Ascending aorta (tissue), 2 donors: ENCODE measurements at regions of chr9 and their contacts with region 1.

Region 1: DNA sequence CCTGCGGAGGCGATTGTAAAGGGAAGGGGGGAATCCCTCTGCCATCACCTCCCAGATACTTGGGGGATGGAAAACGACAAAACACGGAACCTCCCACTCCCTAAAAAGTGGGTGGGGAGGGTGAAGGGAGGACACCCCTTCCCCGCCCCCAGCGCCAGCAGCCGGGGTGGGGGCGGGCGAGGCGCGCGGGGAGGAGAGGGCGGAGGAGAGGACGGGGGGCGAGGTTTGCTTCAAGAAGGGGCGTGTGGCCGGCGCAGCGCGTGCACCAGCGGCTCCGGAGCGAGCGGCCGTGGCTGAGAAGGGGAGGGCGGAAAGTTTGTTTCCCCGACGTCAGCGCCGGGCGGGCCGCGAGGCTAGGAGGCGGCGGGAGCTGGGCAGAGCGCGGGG is at the start of gene PRRX2:
- DNase-seq: peak in 1 of 2 donors; percentile 77
- H3K4me3 ChIP-seq: peak within 1 kb of the TSS; percentile 59 to 76
- H3K27ac ChIP-seq: peak within 1 kb of the TSS; percentile 68 to 74
- H3K4me1 ChIP-seq: peaks cover 0 to 30% of the 10 kb centered on the region in 2 donors
- H3K27me3 ChIP-seq: no peaks in the 10 kb centered on the region
- CTCF ChIP-seq: no peak
- total RNA-seq, gene PRRX2: 112 TPM

Region 2: GRCh38 chr9:129648092-129648763 is 17.2 kb before region 1 on chr9:
- intact Hi-C with region 1: loop called (anchors 2 kb)
- DNase-seq: peak in 1 of 2 donors; percentile 86
- H3K4me3 ChIP-seq: no peak overlapping the region
- H3K27ac ChIP-seq: peak overlapping the region; percentile 70 to 81
- H3K4me1 ChIP-seq: peaks cover 2 to 21% of the 10 kb centered on the region in 2 donors
- H3K27me3 ChIP-seq: no peaks in the 10 kb centered on the region
- CTCF ChIP-seq: no peak

Region 3: GRCh38 chr9:129696938-129697650 is 31.7 kb after region 1 on chr9:
- intact Hi-C with region 1: loop called (anchors 2 kb)
- DNase-seq: peak; percentile 46 to 92
- H3K4me3 ChIP-seq: peak overlapping the region; percentile 47 to 51
- H3K27ac ChIP-seq: peak overlapping the region; percentile 94 to 97
- H3K4me1 ChIP-seq: peaks cover 25 to 48% of the 10 kb centered on the region in 2 donors
- H3K27me3 ChIP-seq: no peaks in the 10 kb centered on the region
- CTCF ChIP-seq: peak in 1 of 3 experiments; percentile 12

Region 4: DNA sequence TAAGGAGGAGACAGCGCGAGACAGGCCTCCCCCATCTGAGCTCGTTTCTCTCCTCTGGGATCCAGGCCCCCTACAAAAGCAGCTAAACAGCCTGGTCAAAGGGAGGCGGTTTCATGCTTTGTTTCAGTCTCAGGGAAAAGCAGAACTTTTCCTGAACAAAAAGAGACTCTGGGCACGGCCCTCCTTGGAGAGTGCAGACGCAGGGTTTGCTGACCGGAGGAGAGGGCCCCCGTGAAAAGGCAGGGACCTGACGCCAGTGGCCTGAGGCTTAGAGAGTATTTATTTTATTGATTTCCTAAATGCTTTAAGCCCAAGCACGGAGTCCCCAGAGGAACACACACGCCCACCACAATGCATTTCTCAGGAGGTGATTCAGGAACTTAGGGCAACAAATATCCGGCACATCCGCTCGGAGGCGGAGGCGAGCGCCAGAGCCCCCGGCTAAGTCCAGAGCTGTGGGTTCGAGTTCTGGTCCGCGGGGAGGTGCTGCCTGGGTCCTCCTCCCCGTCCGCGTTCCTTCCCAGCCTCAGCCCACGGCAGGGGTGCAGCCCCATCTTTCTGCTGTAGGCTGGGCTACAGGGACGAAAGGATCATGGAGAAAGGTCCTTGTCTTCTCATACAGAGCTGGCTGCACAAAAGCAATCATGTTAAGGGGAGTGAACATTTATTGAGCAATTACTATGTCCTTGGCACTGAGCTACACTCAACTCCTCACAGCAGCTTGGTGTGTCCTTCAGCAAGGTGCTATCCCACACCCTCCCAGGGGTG is 47.4 kb after region 1 on chr9:
- intact Hi-C with region 1: loop called (anchors 2 kb)
- DNase-seq: peak in 1 of 2 donors; percentile 80
- H3K4me3 ChIP-seq: peak overlapping the region; percentile 4 to 35
- H3K27ac ChIP-seq: peak overlapping the region; percentile 84 to 91
- H3K4me1 ChIP-seq: peaks cover 31 to 72% of the 10 kb centered on the region in 2 donors
- H3K27me3 ChIP-seq: no peaks in the 10 kb centered on the region
- CTCF ChIP-seq: no peak

Region 5: GRCh38 chr9:129726322-129727160 is 61.2 kb after region 1 on chr9:
- intact Hi-C with region 1: loop called (anchors 2 kb)
- DNase-seq: peak in 1 of 2 donors; percentile 88
- H3K4me3 ChIP-seq: peak overlapping the region in 1 of 2 donors; percentile 27
- H3K27ac ChIP-seq: peak overlapping the region; percentile 73 to 95
- H3K4me1 ChIP-seq: peaks cover 15 to 26% of the 10 kb centered on the region in 2 donors
- H3K27me3 ChIP-seq: no peaks in the 10 kb centered on the region
- CTCF ChIP-seq: peak; percentile 93 to 97 (median 96)